ENCODE measurements at regions of chr3 and their contacts with region 1.

Region 1: DNA sequence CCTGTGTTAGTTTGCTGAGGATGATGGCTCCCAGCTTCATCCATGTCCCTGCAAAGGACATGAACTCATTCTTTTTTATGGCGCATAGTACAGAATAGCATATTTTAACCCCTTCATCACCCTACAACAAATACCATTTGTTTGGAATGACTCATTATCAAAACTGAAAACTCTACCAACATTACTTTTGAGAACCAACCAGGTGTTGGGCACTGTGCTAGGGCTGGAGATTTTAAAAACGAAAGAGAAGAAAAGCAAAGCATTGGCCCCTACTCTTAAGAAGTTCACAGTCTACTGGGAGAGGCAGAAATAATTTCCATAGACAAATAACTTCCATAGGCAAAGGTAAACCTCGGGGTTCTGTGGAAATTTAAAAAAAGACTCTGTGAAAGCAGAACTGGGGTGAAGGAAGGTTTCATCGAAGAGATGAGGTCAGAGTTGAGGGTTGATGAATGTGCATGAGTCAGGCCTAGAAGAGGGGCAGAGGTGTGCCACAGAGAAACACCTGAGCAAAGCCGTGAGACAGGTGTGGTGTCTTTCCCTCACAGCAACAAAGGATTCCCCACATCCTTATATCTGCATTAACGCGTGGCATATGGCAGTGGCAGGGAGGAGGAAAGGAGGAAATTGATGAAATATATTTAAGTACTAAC is 51.0 kb downstream of the MCF2L2 start:
- DNase-seq: peak; percentile 79
- H3K4me3 ChIP-seq: no peak overlapping the region
- H3K27ac ChIP-seq: peak overlapping the region; percentile 57
- H3K4me1 ChIP-seq: peaks cover 35% of the 10 kb centered on the region
- H3K27me3 ChIP-seq: no peaks in the 10 kb centered on the region
- CTCF ChIP-seq: no peak

Region 2: DNA sequence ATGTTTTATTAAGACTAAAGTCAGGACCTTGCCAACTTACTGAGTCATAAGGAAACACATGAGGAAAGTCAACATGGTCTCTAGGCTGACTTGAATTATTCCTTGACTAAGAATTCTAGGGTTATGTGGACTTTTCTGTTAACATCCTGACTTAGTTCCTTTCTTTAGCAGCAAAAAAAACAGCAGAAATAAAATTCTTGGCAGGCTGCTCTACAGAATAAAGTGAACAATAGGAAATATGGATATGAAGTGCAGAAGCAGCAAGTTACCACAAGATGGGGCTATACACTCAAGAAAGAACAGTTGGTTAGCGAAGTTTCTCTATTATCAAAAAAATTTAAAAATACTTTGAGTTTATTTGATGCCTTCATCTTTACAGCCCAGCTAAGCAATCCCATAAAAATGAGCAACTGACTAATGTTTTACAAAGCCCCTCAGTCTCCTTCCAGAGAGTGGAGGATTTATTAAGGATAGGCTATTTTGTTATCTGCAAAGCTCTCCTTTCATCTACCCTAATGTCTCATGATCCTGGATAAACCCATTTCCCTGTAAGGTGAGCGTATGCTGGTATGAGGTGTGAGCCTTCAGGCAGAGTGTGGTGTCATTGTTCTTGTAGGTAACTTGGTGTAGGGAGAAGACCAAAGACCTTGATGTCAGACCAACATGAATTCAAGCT is 255.0 kb before region 1 on chr3:
- CTCF ChIA-PET with region 1: no interaction called
- dilution Hi-C with region 1: no loop called
- in situ Hi-C with region 1: no loop called
- intact Hi-C with region 1: loop called (anchors 1 kb)
- DNase-seq: peak; percentile 28
- H3K4me3 ChIP-seq: no peak overlapping the region
- H3K27ac ChIP-seq: no peak overlapping the region
- H3K4me1 ChIP-seq: peaks cover 5% of the 10 kb centered on the region
- H3K27me3 ChIP-seq: no peaks in the 10 kb centered on the region
- CTCF ChIP-seq: peak; percentile 75 to 84

Region 3: GRCh38 chr3:183178629-183179549 is 198.5 kb before region 1 on chr3:
- CTCF ChIA-PET with region 1: no interaction called
- dilution Hi-C with region 1: no loop called
- in situ Hi-C with region 1: loop called in 1 of 2 experiments (anchors 5 kb)
- intact Hi-C with region 1: loop called (anchors 1 kb)
- DNase-seq: peak; percentile 46
- H3K4me3 ChIP-seq: peak overlapping the region; percentile 55 to 62 (median 60)
- H3K27ac ChIP-seq: no peak overlapping the region
- H3K4me1 ChIP-seq: peaks cover 4% of the 10 kb centered on the region
- H3K27me3 ChIP-seq: no peaks in the 10 kb centered on the region
- CTCF ChIP-seq: peak in 1 of 2 donors; percentile 26

Region 4: DNA sequence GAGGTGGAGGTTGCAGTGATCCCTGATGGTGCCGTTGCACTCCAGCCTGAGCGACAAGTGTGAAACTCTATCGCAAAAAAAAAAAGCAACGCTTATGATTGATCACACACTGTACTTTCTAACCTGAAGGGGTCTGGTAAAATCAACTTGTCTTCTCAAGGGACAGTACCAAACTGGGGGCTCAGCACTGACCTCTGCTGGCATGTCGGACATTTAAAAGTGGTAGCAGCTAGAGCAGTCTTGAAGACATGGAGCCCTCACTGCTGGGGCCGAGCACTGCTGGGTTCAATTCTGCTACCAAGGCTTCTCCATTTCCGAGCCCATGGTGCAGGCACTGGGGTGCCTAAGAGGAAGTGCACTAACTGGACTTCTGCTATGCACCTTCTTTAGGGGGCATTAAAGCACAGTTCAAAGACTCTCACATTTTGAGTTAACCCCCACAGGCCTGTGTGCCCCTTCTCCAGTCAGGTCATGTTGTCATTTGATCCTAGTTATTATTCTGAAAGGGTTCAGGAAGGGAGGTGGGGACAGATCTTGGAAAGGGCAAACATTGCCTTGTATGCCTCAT is 188.5 kb before region 1 on chr3:
- CTCF ChIA-PET with region 1: interaction called, 45 read pairs
- dilution Hi-C with region 1: no loop called
- in situ Hi-C with region 1: loop called in 1 of 2 experiments (anchors 5 kb)
- intact Hi-C with region 1: loop called (anchors 1 kb)
- DNase-seq: no peak
- H3K4me3 ChIP-seq: no peak overlapping the region
- H3K27ac ChIP-seq: no peak overlapping the region
- H3K4me1 ChIP-seq: peaks cover 13% of the 10 kb centered on the region
- H3K27me3 ChIP-seq: no peaks in the 10 kb centered on the region
- CTCF ChIP-seq: peak; percentile 13 to 32

Region 5: DNA sequence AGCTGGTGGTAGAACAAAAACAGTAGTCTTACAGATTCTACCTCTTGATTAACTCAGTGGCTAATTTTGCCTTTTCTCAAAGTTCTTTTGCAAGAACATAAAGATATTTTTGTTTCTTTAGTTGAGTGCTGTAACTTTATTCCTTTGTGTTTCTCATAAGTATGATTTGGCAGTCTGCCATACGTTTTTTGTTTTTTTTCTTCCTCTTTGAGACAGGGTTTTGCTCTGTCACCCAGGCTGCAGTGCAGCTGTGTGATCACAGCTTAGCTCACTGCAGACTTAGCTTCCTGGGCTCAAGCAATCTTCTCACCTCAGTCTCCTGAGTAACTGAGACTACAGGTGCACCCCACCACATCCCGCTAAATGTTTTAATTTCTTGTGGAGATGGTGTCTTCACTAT is 102.0 kb before region 1 on chr3:
- CTCF ChIA-PET with region 1: no interaction called
- dilution Hi-C with region 1: no loop called
- in situ Hi-C with region 1: loop called in 1 of 2 experiments (anchors 10 kb)
- intact Hi-C with region 1: no loop called
- DNase-seq: peak; percentile 64
- H3K4me3 ChIP-seq: no peak overlapping the region
- H3K27ac ChIP-seq: peak overlapping the region; percentile 55
- H3K4me1 ChIP-seq: peaks cover 29% of the 10 kb centered on the region
- H3K27me3 ChIP-seq: no peaks in the 10 kb centered on the region
- CTCF ChIP-seq: no peak

Region 6: DNA sequence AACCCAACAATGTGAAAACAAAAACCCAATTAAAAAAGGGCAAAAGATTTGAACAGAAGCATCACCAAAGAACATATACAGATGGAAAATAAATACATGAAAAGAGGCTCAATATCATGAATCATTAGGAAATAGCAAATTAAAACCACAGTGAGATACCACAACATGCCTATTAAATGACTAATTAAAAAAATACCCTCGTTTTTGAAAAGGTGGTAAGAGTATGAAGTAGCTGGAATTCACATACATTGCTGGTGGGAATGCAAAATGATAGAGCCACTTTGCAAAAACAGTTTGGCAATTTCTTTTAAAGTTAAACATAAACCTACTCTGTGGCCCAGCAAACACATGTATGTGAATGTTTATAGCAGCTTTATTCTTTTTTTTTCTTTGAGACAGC is 48.6 kb before region 1 on chr3:
- CTCF ChIA-PET with region 1: no interaction called
- dilution Hi-C with region 1: no loop called
- in situ Hi-C with region 1: no loop called
- intact Hi-C with region 1: loop called (anchors 1 kb)
- DNase-seq: peak; percentile 76
- H3K4me3 ChIP-seq: no peak overlapping the region
- H3K27ac ChIP-seq: no peak overlapping the region
- H3K4me1 ChIP-seq: peaks cover 19% of the 10 kb centered on the region
- H3K27me3 ChIP-seq: no peaks in the 10 kb centered on the region
- CTCF ChIP-seq: no peak

Measured in mammary epithelial cell (primary cell).